Breast epithelium (tissue), 4 donors: ENCODE measurements at regions of chr19 and their contacts with region 1.

Region 1: GRCh38 chr19:7715671-7716070 is 13.7 kb upstream of the FCER2 start:
- DNase-seq: no peak
- H3K4me3 ChIP-seq: no peak overlapping the region
- H3K27ac ChIP-seq: no peak overlapping the region
- H3K4me1 ChIP-seq: no peaks in the 10 kb centered on the region
- H3K27me3 ChIP-seq: no peaks in the 10 kb centered on the region
- CTCF ChIP-seq: no peak
- POLR2A ChIP-seq: no peak

Region 2: DNA sequence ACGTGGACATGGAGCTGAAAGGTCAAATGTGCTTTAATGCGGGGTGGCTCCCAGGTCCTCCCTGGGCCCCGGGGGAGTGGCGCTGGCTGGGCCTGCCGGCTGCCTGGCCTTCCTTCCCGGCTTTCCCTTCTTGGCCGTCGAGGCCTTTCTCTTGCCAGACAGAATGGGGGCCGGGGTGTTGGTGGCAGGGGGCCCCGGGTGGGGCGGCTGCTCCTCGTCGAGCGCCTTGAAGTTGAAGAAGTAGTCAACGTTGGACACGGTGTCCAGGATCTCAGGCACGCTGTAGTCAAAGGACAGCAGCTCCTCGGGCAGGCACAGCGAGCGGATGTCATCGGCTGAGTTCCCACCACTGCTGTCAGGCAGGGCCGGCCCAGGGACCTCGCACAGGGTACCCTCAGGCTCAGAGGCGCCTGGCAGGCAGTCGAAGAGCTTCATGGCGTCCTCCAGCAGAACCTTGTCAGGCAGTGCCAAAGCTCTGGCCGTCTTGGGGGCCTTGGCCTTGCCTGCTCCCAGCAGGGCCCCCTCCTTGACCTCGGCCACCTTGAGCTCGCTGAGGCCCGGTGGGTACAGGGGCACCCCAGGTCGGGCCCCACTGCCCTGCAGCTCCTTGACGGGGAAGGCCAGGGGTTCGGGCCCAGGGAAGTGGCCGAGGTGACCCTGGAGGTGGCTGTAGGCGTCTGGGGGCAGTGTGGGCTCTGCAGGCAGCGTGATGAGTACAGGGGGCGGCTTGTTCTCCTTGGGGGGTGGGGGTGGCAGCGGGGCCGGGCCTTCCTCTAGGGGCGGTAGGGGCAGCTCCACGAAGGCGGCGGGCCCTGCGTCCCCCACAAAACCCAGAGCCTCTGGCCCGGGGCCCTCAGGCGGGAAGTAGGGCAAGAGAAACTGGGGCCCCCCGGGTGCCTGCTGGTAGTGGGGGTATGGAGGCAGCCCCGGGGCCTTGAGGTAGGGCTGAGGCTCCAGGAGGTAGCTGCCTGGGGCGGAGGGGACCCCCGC is 1932.4 kb before region 1 on chr19:
- intact Hi-C with region 1: no loop called
- DNase-seq: no peak
- H3K4me3 ChIP-seq: no peak overlapping the region
- H3K27ac ChIP-seq: no peak overlapping the region
- H3K4me1 ChIP-seq: no peaks in the 10 kb centered on the region
- H3K27me3 ChIP-seq: no peaks in the 10 kb centered on the region
- CTCF ChIP-seq: no peak
- POLR2A ChIP-seq: no peak

Region 3: DNA sequence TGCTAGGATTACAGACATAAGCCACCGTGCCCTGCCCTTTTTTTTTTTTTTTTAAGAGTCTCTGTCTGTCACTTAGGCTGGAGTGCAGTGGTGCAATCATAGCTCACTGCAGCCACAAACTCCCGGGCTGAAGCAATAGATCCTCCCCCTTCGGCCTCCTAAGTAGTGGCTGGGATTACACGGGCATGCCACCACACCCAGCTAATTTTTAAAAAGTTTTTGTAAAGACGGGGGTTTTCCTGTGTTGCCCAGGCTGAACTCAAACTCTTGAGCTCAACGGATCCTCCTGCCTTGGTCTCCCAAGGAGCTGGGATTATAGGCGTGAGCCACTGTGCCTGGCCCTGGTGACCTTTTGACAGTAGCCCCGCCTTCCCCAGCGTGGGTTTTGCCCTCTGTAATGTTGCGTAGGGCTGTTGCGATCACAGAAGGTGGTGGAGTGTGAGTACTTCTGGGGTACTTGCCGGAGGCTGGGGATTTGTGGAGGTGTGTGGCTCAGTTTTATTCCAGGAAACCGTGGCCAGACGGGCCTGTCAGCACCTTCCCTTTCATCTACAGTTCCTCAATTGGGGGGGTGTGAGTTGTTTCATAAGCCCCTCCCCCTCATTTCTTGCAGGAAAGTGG is 58.4 kb before region 1 on chr19:
- intact Hi-C with region 1: loop called (anchors 2 kb)
- DNase-seq: no peak
- H3K4me3 ChIP-seq: no peak overlapping the region
- H3K27ac ChIP-seq: no peak overlapping the region
- H3K4me1 ChIP-seq: no peaks in the 10 kb centered on the region
- H3K27me3 ChIP-seq: no peaks in the 10 kb centered on the region
- CTCF ChIP-seq: no peak
- POLR2A ChIP-seq: no peak